ENCODE measurements at regions of chr19 and their contacts with region 1.

Region 1: DNA sequence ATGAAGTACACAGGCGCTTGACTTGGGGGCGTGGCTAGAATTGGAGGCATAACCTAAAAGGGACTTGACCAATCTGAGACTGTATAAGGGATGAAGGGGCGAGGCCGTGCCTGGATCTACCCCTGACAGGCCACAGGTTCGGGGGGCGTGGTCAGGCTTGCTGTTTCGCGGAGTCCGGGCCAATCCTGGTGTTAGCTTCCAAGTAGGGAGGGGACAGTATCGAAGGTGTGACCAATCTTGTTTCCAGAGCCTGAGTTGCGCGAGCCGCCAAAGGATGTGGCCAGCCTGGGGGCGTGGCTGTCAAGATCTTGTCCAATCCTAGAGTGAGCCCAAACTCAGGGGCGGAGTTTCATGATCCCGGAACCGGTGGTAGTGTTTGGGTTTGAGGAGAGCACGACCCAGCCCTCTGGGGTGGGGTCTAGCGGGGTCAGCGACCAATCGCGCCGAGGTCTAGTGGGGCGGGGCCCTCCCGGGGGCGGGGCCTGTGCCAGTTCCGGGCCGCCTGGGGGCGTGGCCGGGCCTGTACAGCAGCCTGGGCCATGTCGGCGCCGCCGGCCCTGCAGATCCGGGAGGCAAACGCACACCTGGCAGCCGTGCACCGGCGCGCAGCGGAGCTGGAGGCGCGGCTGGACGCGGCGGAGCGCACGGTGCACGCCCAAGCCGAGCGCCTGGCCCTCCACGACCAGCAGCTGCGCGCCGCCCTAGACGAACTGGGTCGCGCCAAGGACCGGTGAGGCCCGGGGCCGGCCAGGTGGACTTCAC is at the start of gene VMAC:
- DNase-seq: peak; percentile 98 to 100 (median 98)
- ATAC-seq: peak; percentile 90
- H3K4me3 ChIP-seq: peak within 1 kb of the TSS; percentile 90
- H3K27ac ChIP-seq: peak within 1 kb of the TSS; percentile 96
- H3K4me1 ChIP-seq: peaks cover 4 to 30% of the 10 kb centered on the region in 2 experiments; a peak in 4 of 5 replicates
- H3K27me3 ChIP-seq: no peaks in the 10 kb centered on the region
- CTCF ChIP-seq: no peak
- EP300 ChIP-seq: no peak
- POLR2A ChIP-seq: no peak; the same call in 1 of the 2 replicates
- RAD21 ChIP-seq: no peak
- polyA plus RNA-seq, gene VMAC: 0.03 to 0.06 TPM

Region 2: DNA sequence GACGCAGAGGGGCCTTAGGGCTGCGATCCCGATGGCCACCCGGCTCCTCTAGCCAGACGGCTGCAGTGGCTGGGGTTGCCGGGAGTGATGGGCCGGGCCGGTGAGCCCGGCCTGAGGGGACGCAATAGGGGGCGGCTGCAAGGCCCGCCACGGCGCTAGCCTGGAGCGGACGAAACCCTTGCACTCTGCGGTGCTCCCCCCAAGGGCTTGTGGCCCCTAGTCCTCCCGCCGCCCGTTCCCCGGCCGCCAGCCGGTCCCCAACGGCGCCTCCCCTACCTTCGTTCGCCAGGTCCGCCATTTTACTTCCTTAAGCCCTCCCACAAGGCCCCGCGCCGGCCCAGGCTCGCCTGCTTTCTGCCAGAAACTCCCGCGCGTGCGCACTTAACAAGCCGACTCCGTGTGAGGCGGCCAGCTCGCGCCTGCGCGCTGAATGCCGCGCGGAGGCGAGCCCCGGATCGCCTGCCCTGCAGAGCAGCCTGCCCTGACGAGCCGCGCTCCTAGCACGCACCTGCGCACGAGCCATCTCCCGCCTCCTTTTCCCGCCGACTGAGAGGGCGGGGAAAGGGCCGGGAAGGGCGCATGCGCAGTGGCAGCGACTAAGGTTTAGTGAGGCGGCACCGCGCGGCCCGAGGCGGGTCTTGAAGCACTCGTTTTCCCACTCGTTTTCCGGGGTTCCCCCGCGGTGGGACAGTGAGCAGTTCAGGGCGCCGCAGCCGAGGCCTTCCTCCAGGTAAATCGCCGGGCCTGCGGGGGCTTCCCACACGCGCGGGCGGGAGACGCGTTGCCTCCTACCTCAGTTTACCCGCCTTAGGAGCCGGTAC is 73.5 kb after region 1 on chr19 and contains the start of gene RANBP3:
- CTCF ChIA-PET with region 1: no interaction called
- POLR2A ChIA-PET with region 1: interaction called, 3 read pairs
- in situ Hi-C with region 1: no loop called
- intact Hi-C with region 1: loop called (anchors 2 kb)
- DNase-seq: peak; percentile 97 to 99 (median 98)
- ATAC-seq: peak; percentile 94
- H3K4me3 ChIP-seq: peak within 1 kb of the TSS; percentile 92
- H3K27ac ChIP-seq: peak within 1 kb of the TSS; percentile 96
- H3K4me1 ChIP-seq: peaks cover 13 to 43% of the 10 kb centered on the region in 2 experiments; a peak in 4 of 5 replicates
- H3K27me3 ChIP-seq: no peaks in the 10 kb centered on the region; a peak in 1 of 5 replicates
- CTCF ChIP-seq: no peak
- EP300 ChIP-seq: no peak
- POLR2A ChIP-seq: peak; percentile 90
- RAD21 ChIP-seq: no peak
- polyA plus RNA-seq, gene RANBP3: 0.90 to 1.8 TPM

Region 3: DNA sequence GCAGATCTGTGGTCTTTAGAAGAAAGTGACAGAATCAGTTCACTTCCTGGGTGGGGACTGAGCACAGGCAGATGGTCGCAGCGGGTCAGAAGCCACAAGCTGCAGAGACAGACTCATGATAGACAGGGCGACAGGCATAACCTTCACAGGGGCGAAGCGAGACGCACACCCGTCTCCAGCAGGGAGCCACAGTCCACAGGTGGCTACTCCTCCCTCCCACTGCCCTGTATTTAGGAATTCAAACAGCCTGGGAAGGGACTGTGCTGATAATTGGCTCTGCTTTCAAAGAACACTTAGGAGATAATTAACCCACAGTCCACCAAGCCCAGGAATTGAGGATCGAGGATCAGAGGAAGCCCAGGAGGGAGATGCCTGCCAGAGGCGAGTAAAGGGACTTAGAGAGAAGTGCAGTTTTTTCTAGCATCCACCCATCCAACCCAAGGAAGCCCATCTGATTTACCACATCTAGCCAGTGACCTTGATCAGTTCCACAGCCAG is 182.6 kb after region 1 on chr19:
- CTCF ChIA-PET with region 1: no interaction called
- POLR2A ChIA-PET with region 1: no interaction called
- in situ Hi-C with region 1: no loop called
- intact Hi-C with region 1: no loop called
- DNase-seq: peak; percentile 41 to 77 (median 62)
- ATAC-seq: peak; percentile 88
- H3K4me3 ChIP-seq: no peak overlapping the region
- H3K27ac ChIP-seq: peak overlapping the region; percentile 61
- H3K4me1 ChIP-seq: peaks cover 14 to 33% of the 10 kb centered on the region in 2 experiments
- H3K27me3 ChIP-seq: no peaks in the 10 kb centered on the region
- CTCF ChIP-seq: no peak
- EP300 ChIP-seq: peak; percentile 14; the same call in 1 of the 2 replicates
- POLR2A ChIP-seq: no peak
- RAD21 ChIP-seq: no peak